ENCODE measurements at regions of chr10 and their contacts with region 1.

Region 1: GRCh38 chr10:103712570-103713498 is 142.5 kb downstream of the SH3PXD2A start:
- DNase-seq: peak; percentile 59 to 80 (median 67)
- H3K4me3 ChIP-seq: no peak overlapping the region
- H3K4me3 Mint-ChIP-seq: no peak overlapping the region
- H3K27ac ChIP-seq: no peak overlapping the region
- H3K27ac Mint-ChIP-seq: peak overlapping the region in 2 of 8 donors; percentile 42 to 74
- H3K4me1 ChIP-seq: no peaks in the 10 kb centered on the region
- H3K4me1 Mint-ChIP-seq: peaks cover 0 to 4% (median 0%) of the 10 kb centered on the region in 3 donors
- H3K27me3 ChIP-seq: no peaks in the 10 kb centered on the region
- H3K27me3 Mint-ChIP-seq: peaks cover 1 to 3% of the 10 kb centered on the region in 2 donors

Region 2: GRCh38 chr10:103592186-103593021 is 120.4 kb before region 1 on chr10:
- CTCF ChIA-PET with region 1: no interaction called
- POLR2A ChIA-PET with region 1: no interaction called
- DNase-seq: peak in 1 of 5 donors; percentile 25
- H3K4me3 ChIP-seq: no peak overlapping the region
- H3K4me3 Mint-ChIP-seq: no peak overlapping the region
- H3K27ac ChIP-seq: no peak overlapping the region
- H3K27ac Mint-ChIP-seq: no peak overlapping the region
- H3K4me1 ChIP-seq: no peaks in the 10 kb centered on the region
- H3K4me1 Mint-ChIP-seq: no peaks in the 10 kb centered on the region
- H3K27me3 ChIP-seq: no peaks in the 10 kb centered on the region
- H3K27me3 Mint-ChIP-seq: no peaks in the 10 kb centered on the region

Region 3: DNA sequence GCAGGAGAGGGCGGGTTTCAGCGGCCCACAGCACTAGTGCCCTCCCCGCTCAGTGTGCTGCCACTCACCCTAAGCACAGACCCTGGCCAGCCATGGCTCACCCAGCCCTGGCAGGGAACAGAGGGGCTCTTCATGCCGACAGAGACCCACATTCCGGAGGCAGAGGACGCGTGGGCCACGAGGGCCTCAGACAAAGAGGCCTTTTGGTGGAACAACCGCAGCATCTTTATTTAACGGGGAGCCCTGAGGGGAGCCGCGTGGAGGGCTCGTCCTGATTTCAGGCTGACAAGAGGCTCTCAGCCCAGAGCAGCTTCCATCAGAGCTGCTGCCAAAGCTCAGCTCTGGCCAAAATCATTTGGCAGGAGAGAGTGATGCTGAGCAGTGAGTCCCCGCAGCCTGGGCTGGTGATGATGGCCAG is 14.7 kb after region 1 on chr10:
- CTCF ChIA-PET with region 1: interaction called, 22 read pairs
- POLR2A ChIA-PET with region 1: no interaction called
- DNase-seq: no peak
- H3K4me3 ChIP-seq: no peak overlapping the region
- H3K4me3 Mint-ChIP-seq: no peak overlapping the region
- H3K27ac ChIP-seq: no peak overlapping the region
- H3K27ac Mint-ChIP-seq: no peak overlapping the region
- H3K4me1 ChIP-seq: no peaks in the 10 kb centered on the region
- H3K4me1 Mint-ChIP-seq: no peaks in the 10 kb centered on the region
- H3K27me3 ChIP-seq: no peaks in the 10 kb centered on the region
- H3K27me3 Mint-ChIP-seq: peaks cover 0 to 4% of the 10 kb centered on the region in 2 donors

Region 4: DNA sequence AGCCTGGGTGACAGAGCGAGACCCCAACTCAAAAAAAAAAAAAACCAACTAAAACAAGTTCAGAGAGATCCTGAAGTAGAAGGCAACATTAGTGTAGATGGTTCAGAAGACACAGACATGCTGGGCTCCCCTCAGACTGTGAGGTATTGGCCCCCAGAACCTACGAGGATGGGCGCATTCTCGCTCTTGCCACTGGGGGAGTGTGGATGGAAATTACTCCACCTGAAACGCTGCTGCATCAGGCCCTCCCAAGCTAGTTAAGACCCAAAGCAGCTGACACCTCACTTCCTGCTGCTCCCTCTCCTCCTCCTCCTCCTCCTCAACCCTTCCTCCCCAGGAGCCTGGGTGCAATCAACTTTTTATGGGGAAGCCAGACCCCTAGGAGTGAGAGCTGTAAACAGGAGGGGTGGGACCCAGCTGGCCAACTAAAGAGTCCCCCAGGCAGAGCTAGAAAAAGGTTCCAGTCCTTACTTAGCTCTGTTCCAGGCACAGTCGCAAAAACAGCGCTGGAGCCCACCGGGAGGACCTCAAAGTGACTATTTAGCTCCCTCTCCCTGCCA is 135.2 kb after region 1 on chr10:
- CTCF ChIA-PET with region 1: interaction called, 71 read pairs
- POLR2A ChIA-PET with region 1: no interaction called
- DNase-seq: no peak
- H3K4me3 ChIP-seq: no peak overlapping the region
- H3K4me3 Mint-ChIP-seq: no peak overlapping the region
- H3K27ac ChIP-seq: no peak overlapping the region
- H3K27ac Mint-ChIP-seq: no peak overlapping the region
- H3K4me1 ChIP-seq: peaks cover 16% of the 10 kb centered on the region
- H3K4me1 Mint-ChIP-seq: peaks cover 13 to 18% (median 17%) of the 10 kb centered on the region in 3 donors
- H3K27me3 ChIP-seq: peaks cover 4% of the 10 kb centered on the region
- H3K27me3 Mint-ChIP-seq: peaks cover 10 to 16% of the 10 kb centered on the region in 2 donors

Region 5: DNA sequence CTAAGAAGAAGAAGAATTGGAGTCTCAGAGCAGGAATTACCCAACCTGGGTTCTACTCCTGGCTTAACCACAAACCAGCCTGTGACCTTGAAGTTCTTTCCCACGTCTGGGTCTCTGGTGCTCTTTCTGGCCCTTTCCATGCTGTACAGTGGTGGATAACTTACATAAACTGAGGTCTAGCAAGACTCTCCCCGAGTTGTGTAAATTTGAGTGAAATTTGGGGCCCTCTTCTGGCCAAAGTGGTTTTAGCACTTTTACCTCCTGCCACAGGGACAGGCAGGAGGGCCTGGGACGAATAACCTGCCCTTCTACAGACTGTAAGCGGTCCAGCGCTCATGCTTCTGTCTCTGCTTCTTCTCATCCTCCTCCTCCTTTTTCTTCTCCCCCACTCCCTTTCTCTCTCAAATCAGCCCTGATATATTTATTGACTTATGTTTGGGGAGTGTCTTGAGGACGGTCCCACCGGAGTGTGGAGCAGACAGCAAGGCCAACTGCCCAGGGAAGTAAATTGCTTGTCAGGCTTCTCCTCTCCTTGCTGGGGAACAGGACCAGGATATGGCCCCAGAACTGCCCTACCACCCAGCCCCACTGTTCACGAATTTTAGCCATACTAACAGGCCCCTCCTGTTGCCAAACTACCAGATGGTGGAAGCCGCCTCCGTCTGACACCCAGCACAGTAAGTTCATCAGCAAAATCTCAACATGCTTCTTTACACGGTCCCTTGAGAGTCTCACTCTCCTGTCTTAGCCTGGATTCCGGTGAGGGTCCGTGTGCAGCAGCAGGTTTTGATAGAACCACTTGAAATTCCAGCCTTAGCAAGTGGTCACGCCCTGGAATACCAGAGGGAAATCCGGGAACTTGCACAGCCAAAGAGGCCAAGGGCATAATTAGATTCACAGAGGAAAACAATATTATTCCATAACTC is 146.6 kb after region 1 on chr10:
- CTCF ChIA-PET with region 1: interaction called, 71 read pairs
- POLR2A ChIA-PET with region 1: interaction called, 6 read pairs
- DNase-seq: peak in 4 of 5 donors; percentile 29 to 53 (median 36)
- H3K4me3 ChIP-seq: no peak overlapping the region
- H3K4me3 Mint-ChIP-seq: no peak overlapping the region
- H3K27ac ChIP-seq: no peak overlapping the region
- H3K27ac Mint-ChIP-seq: no peak overlapping the region
- H3K4me1 ChIP-seq: peaks cover 6% of the 10 kb centered on the region
- H3K4me1 Mint-ChIP-seq: peaks cover 7 to 13% (median 10%) of the 10 kb centered on the region in 3 donors
- H3K27me3 ChIP-seq: peaks cover 8% of the 10 kb centered on the region
- H3K27me3 Mint-ChIP-seq: peaks cover 14 to 27% of the 10 kb centered on the region in 2 donors